HepG2 (cell line): ENCODE measurements at regions of chr22 and their contacts with region 1.

Region 1: DNA sequence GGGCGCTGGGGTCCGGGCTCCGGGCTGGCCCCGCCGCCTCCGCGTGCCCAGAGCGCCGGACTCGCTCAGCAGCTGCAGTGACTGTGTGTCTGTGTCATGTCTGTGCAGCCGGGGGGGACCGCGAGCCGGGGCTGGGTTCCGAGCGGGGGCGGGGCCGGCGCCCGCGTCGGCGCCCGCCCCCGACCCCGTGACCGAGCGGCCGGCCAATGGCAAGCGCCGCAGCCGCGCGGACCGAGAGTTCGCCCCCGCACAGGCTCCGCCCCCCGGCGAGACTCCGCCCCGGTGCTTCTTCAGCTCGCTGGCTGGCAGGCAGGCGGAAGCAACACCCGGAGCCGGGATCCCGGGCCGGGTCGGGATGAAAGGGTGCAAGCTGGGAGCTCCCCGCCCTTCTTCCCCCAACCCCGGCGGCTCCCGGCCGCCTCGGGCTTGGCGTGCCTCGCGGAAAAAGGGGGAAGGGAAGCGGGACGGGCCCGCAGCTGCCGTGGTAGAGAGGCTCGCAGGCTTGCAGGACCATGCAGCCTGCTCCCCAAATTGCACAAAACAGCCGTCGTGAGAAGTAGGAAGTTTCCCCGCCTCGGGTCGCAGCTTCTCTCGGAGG is 750 bp upstream of the LARGE1 start:
- DNase-seq: peak; percentile 86
- ATAC-seq: peak; percentile 80
- H3K4me3 ChIP-seq: peak overlapping the region; percentile 55 to 77 (median 70)
- H3K27ac ChIP-seq: no peak overlapping the region
- H3K4me1 ChIP-seq: peaks cover 56% of the 10 kb centered on the region
- H3K27me3 ChIP-seq: peaks cover 3 to 23% of the 10 kb centered on the region in 2 experiments; a peak in 3 of 5 replicates
- CTCF ChIP-seq: 0 out of 2 replicates have a peak, but pooled peaks have one; percentile 7
- EP300 ChIP-seq: no peak
- POLR2A ChIP-seq: peak; percentile 49 to 87
- RAD21 ChIP-seq: peak; percentile 26; the same call in 1 of the 2 replicates

Region 2: DNA sequence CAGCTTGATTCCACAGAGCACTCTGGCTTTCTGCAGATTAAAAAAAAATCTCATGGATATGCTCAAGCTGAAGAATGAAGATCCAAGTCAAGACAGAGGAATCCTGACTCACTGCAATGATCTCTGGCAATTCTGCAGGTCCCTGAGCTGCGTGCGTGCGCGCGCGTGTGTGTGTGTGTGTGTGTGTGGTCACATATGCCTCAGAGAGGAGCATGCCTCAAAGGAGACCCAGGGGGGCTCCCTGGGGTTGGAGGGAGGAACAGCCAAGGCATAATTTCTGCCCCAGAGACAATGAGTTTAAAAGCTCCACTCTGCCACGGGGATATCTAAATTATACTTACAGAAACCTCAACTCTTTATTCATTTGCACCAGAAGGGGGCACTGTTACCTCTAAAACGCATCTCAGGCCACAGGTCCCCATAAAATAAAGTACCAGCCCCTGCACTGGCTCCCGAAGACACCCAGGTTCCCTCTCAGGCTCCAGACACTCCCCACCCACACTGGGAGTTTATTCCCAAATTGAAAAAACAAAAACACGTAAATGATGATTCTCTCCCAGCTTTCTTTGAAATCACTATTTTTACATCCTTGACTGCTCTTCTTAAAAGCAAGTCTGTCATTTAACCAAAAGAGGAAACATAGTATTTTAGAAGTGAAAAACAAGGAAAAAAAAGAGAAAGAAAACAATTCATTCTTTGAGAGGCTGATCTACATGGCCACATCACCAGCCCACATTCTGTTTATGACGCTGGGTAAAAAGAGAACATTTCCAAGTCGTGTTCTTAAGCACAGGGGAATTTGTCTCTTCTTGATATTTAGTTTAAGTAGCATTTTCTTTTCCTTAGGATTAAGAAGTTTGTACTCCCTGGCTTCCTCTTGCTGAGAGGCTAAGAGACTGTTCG is 401.7 kb before region 1 on chr22:
- CTCF ChIA-PET with region 1: no interaction called
- POLR2A ChIA-PET with region 1: no interaction called
- in situ Hi-C with region 1: loop called (anchors 25 kb)
- intact Hi-C with region 1: loop called (anchors 10 kb)
- DNase-seq: peak; percentile 73
- ATAC-seq: peak; percentile 77
- H3K4me3 ChIP-seq: no peak overlapping the region
- H3K27ac ChIP-seq: peak overlapping the region; percentile 51
- H3K4me1 ChIP-seq: peaks cover 91% of the 10 kb centered on the region
- H3K27me3 ChIP-seq: no peaks in the 10 kb centered on the region
- CTCF ChIP-seq: peak; percentile 79
- EP300 ChIP-seq: no peak
- POLR2A ChIP-seq: no peak
- RAD21 ChIP-seq: peak; percentile 90

Region 3: GRCh38 chr22:33579448-33580093 is 341.5 kb before region 1 on chr22:
- CTCF ChIA-PET with region 1: no interaction called
- POLR2A ChIA-PET with region 1: no interaction called
- in situ Hi-C with region 1: no loop called
- intact Hi-C with region 1: loop called (anchors 5 kb)
- DNase-seq: peak; percentile 81
- ATAC-seq: peak; percentile 91
- H3K4me3 ChIP-seq: no peak overlapping the region
- H3K27ac ChIP-seq: peak overlapping the region; percentile 90
- H3K4me1 ChIP-seq: peaks cover 54% of the 10 kb centered on the region
- H3K27me3 ChIP-seq: no peaks in the 10 kb centered on the region
- CTCF ChIP-seq: peak; percentile 97
- EP300 ChIP-seq: no peak
- POLR2A ChIP-seq: no peak
- RAD21 ChIP-seq: peak; percentile 97

Region 4: GRCh38 chr22:33867115-33867866 is 53.7 kb before region 1 on chr22:
- CTCF ChIA-PET with region 1: no interaction called
- POLR2A ChIA-PET with region 1: no interaction called
- in situ Hi-C with region 1: no loop called
- intact Hi-C with region 1: no loop called
- DNase-seq: peak; percentile 48
- ATAC-seq: peak; percentile 72
- H3K4me3 ChIP-seq: no peak overlapping the region; a peak in 1 of 6 replicates
- H3K27ac ChIP-seq: peak overlapping the region; percentile 39
- H3K4me1 ChIP-seq: peaks cover 41% of the 10 kb centered on the region
- H3K27me3 ChIP-seq: no peaks in the 10 kb centered on the region
- CTCF ChIP-seq: no peak
- EP300 ChIP-seq: no peak; a peak in 1 of 4 replicates
- POLR2A ChIP-seq: no peak
- RAD21 ChIP-seq: no peak

Region 5: GRCh38 chr22:34105461-34106062 is 184.5 kb after region 1 on chr22:
- CTCF ChIA-PET with region 1: interaction called, 16 read pairs
- POLR2A ChIA-PET with region 1: no interaction called
- in situ Hi-C with region 1: loop called (anchors 5 kb)
- intact Hi-C with region 1: loop called (anchors 1 kb)
- DNase-seq: peak; percentile 31
- ATAC-seq: peak; percentile 76
- H3K4me3 ChIP-seq: no peak overlapping the region
- H3K27ac ChIP-seq: no peak overlapping the region
- H3K4me1 ChIP-seq: no peaks in the 10 kb centered on the region
- H3K27me3 ChIP-seq: peaks cover 0 to 4% of the 10 kb centered on the region in 2 experiments; a peak in 2 of 5 replicates
- CTCF ChIP-seq: peak; percentile 81
- EP300 ChIP-seq: no peak
- POLR2A ChIP-seq: no peak
- RAD21 ChIP-seq: no peak

Region 6: DNA sequence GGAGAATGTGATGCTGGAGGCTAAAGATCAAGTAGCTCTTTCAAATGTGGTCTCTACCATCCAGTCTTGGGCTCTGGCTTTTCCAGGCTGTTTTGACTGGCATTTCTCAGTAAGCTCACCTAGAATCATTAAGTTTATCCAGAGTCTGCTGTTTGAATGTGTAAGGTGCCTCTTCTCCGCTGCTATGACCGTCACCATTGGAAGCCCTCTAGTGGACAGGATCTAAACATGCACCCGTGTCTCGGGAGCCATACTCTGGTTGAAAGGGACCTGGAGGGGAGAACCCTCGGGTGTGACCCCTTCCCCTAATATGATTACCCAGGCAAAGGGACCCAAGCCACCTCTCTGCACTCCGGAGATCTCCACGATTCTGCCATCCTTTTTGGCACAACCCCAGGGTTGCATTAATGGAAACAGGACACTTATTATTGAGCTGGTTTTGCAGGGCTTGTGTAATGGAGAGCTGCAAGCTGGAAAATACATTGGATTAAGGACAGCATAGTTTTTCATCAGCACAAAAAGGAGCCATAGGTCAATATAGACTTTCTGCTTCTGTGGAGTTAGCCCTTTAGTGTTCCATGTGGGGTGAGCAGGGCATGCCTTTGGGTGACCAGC is 190.3 kb after region 1 on chr22:
- CTCF ChIA-PET with region 1: interaction called, 16 read pairs
- POLR2A ChIA-PET with region 1: no interaction called
- in situ Hi-C with region 1: loop called (anchors 5 kb)
- intact Hi-C with region 1: no loop called
- DNase-seq: peak; percentile 22
- ATAC-seq: peak; percentile 89
- H3K4me3 ChIP-seq: no peak overlapping the region
- H3K27ac ChIP-seq: no peak overlapping the region
- H3K4me1 ChIP-seq: no peaks in the 10 kb centered on the region
- H3K27me3 ChIP-seq: no peaks in the 10 kb centered on the region; a peak in 3 of 5 replicates
- CTCF ChIP-seq: peak; percentile 76
- EP300 ChIP-seq: no peak
- POLR2A ChIP-seq: no peak
- RAD21 ChIP-seq: no peak